CD4-positive, alpha-beta T cell (primary cell): ENCODE measurements at regions of chr11 and their contacts with region 1.

Region 1: DNA sequence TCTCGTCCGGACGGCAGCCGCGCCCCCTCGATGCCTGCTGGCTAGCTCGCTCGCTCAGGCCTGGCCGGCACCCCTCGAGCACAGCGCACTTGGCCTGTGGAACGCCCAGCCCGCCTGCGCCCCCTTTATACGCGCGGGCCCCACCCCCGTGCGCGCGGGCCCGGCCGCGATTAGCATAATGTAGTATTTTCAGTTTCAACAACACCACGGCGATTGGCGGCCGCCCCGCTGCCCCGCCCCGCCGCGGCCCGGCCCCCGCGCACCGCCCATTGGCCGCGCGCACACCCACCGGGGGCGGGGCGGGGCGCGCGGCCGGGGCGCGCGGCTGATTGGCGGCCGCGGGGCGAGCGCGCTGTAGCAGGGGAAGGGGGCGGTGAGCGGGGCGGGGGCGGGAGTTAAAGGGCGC is at the start of gene CDKN1C:
- DNase-seq: peak; percentile 68 to 95 (median 82)
- ATAC-seq: peak; percentile 87
- H3K4me3 ChIP-seq: peak within 1 kb of the TSS; percentile 84
- H3K4me3 Mint-ChIP-seq: peak within 1 kb of the TSS; percentile 96
- H3K27ac ChIP-seq: no peak within 1 kb of the TSS
- H3K27ac Mint-ChIP-seq: peak within 1 kb of the TSS; percentile 77
- H3K4me1 ChIP-seq: peaks cover 41% of the 10 kb centered on the region
- H3K4me1 Mint-ChIP-seq: peaks cover 19% of the 10 kb centered on the region
- H3K27me3 ChIP-seq: peaks cover 0 to 4% of the 10 kb centered on the region in 2 experiments
- H3K27me3 Mint-ChIP-seq: no peaks in the 10 kb centered on the region
- CTCF ChIP-seq: no peak
- total RNA-seq, gene CDKN1C: 1.9 to 2.5 TPM

Region 2: DNA sequence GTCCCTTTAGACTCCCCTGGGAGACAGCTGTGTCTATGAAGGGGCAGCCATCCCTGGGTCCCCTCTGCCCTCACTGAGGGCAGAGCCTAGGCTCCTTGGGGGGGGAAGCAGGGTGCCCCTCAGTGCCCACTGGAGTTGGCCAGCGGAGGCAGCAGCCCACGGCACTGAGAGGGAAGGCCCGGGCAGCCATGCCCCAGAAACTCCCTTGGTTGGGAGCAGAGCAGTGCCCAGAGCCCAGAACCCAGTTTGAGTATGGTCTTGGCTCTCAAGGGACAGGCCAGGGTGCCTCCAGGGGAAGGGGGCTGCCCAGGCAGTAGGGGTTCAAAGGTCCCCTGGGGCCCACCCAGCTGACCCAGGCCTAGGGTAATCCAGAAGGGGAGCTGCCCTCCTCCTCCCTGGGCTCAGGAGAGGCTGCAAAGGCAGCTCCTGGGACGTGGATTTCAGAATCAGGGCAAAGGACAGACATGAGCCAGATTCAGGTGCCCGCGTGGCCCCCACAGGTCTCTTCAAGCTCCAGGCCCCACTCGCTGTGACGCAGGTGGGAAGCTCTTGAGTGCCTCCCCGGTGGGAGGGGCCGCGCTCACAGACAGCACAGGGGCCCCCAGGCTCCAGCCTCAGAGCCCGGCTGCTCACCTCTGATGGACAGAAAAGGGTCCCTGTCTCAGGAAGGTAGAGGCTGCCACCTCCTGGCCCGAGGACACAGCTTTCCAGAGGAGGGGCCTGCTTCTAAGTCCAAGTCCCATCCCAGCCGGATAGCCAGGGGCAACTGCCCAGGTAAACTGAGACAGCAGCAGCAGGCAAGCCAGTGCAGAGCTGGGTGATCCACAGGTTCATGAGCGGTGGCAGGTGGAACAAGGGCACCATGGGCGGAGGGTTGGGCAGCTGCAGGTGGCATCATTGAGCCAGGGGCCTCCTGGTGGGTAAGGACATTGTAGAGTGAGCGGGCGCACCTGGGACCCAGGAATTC is 586.6 kb before region 1 on chr11:
- CTCF ChIA-PET with region 1: no interaction called
- POLR2A ChIA-PET with region 1: no interaction called
- intact Hi-C with region 1: loop called in 1 of 2 experiments (anchors 5 kb)
- DNase-seq: peak in 4 of 14 experiments; percentile 18 to 31 (median 23)
- ATAC-seq: no peak
- H3K4me3 ChIP-seq: no peak overlapping the region
- H3K4me3 Mint-ChIP-seq: peak overlapping the region; percentile 87
- H3K27ac ChIP-seq: peak overlapping the region; percentile 12 to 54
- H3K27ac Mint-ChIP-seq: peak overlapping the region; percentile 89
- H3K4me1 ChIP-seq: peaks cover 49% of the 10 kb centered on the region
- H3K4me1 Mint-ChIP-seq: peaks cover 53% of the 10 kb centered on the region
- H3K27me3 ChIP-seq: no peaks in the 10 kb centered on the region
- H3K27me3 Mint-ChIP-seq: no peaks in the 10 kb centered on the region
- CTCF ChIP-seq: peak; percentile 22

Region 3: DNA sequence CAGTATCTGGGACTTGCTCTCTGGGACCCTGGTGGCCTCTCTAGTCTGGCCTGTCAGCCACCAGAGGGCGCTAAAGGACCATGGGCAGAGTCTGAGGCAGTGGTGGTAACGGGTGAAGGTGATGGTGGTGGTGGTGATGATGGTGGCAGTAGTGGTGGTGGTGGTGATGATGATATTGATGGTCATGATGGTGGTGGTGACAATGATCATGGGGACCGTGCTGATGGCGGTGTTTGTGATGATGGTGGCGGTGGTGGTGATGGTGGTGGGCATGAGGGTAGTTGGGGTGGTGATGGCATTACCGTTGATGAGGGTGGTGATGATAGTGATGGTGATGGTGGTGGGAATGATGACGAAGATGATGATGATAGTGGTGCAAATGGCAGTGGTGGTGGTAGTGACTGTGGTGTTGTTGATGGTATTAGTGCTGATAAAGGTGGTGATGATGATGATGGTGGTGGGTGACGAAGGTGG is 457.3 kb before region 1 on chr11:
- CTCF ChIA-PET with region 1: no interaction called
- POLR2A ChIA-PET with region 1: interaction called, 5 read pairs
- intact Hi-C with region 1: loop called in 1 of 2 experiments (anchors 1 kb)
- DNase-seq: peak; percentile 80 to 94 (median 88)
- ATAC-seq: peak; percentile 97
- H3K4me3 ChIP-seq: no peak overlapping the region
- H3K4me3 Mint-ChIP-seq: no peak overlapping the region
- H3K27ac ChIP-seq: no peak overlapping the region
- H3K27ac Mint-ChIP-seq: no peak overlapping the region
- H3K4me1 ChIP-seq: peaks cover 3% of the 10 kb centered on the region
- H3K4me1 Mint-ChIP-seq: no peaks in the 10 kb centered on the region
- H3K27me3 ChIP-seq: no peaks in the 10 kb centered on the region
- H3K27me3 Mint-ChIP-seq: no peaks in the 10 kb centered on the region
- CTCF ChIP-seq: peak; percentile 86

Region 4: DNA sequence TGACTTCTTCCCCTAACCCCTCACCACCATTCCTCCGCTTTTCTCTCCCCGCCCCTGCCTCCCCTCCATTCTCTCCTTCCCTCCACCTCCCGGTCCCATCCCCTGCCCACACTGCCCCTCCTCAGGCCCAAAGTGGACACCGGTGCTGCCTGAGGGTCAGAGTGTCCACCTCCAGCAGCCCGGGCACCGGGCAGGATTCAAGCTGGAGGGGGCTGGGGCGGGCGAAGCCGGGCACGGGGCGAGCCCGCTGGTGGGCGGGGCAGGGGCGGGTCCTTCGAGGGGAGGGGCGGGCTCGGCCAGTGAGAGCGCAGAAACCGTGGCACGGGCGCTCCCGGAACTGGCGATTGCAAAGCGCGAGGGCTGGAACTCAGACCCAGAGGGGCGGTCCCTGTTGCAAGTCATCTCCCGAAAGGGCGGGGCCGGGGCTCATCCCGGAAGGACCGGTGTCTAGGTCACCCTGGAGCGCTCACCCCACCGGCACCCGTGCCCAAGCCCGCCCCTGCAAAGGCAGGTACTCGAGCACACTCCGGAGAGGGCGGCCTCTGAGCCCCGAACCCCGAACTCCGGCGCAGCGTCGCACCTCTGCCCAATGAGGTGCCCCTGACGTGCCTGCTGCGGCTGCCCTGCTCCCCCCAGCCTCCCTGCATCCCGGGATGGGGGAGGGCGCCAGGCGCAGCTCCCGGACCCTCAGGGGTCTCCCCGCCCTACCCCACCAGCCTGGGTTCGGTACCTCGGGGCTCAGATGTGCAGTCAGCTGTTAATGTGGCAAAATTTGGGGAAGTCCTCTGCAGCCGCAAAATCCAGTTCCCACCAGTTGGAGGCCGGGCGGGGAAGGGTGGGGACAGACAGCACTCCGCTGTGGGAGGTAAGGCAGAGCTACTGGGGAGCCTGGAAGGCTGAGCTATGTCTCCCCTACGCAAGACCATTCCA is 16.4 kb after region 1 on chr11:
- CTCF ChIA-PET with region 1: interaction called, 10 read pairs
- POLR2A ChIA-PET with region 1: interaction called, 18 read pairs
- intact Hi-C with region 1: loop called in 1 of 2 experiments (anchors 2 kb)
- DNase-seq: peak; percentile 71 to 96 (median 87)
- ATAC-seq: peak; percentile 83
- H3K4me3 ChIP-seq: peak overlapping the region; percentile 69
- H3K4me3 Mint-ChIP-seq: peak overlapping the region; percentile 86
- H3K27ac ChIP-seq: peak overlapping the region; percentile 18 to 50
- H3K27ac Mint-ChIP-seq: peak overlapping the region; percentile 44
- H3K4me1 ChIP-seq: peaks cover 54% of the 10 kb centered on the region
- H3K4me1 Mint-ChIP-seq: peaks cover 49% of the 10 kb centered on the region
- H3K27me3 ChIP-seq: no peaks in the 10 kb centered on the region
- H3K27me3 Mint-ChIP-seq: no peaks in the 10 kb centered on the region
- CTCF ChIP-seq: no peak